PC-9 (cell line): ENCODE measurements at regions of chr2 and their contacts with region 1.

Region 1: DNA sequence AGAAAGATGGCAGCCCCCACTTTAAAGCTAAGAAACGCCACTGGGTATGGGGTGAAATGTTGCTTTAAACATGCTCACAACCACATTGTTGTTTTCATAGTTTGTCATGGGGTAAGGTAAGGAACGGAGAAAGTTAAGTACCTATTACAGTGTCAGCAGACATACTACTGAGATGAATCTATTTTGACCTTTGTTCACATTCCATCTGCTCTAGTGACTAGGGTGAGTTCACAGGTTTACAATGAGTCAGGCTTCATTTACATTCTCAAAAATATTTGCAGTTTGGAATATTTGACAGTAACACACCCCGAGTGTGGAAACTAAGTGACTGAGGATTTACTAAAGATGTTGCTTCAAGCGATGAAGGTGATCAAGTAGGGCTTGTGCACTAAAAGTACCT is 428.7 kb upstream of the ACVR2A start:
- DNase-seq: peak; percentile 0 to 86
- H3K4me3 ChIP-seq: no peak overlapping the region
- H3K27ac ChIP-seq: peak overlapping the region; percentile 58
- H3K4me1 ChIP-seq: peaks cover 28% of the 10 kb centered on the region
- H3K27me3 ChIP-seq: no peaks in the 10 kb centered on the region
- CTCF ChIP-seq: no peak

Region 2: GRCh38 chr2:147463881-147464520 is 47.9 kb after region 1 on chr2:
- CTCF ChIA-PET with region 1: no interaction called
- POLR2A ChIA-PET with region 1: no interaction called
- intact Hi-C with region 1: loop called (anchors 5 kb)
- DNase-seq: no peak
- H3K4me3 ChIP-seq: no peak overlapping the region
- H3K27ac ChIP-seq: no peak overlapping the region
- H3K4me1 ChIP-seq: peaks cover 8% of the 10 kb centered on the region
- H3K27me3 ChIP-seq: no peaks in the 10 kb centered on the region
- CTCF ChIP-seq: no peak